ENCODE measurements at regions of chr4 and their contacts with region 1.

Region 1: GRCh38 chr4:152500800-152501434 is 35.0 kb downstream of the FBXW7 start:
- DNase-seq: peak; percentile 93
- ATAC-seq: peak; percentile 74
- H3K4me3 ChIP-seq: no peak overlapping the region
- H3K27ac ChIP-seq: no peak overlapping the region
- H3K4me1 ChIP-seq: peaks cover 3% of the 10 kb centered on the region; the same call in 1 of the 2 replicates
- H3K27me3 ChIP-seq: no peaks in the 10 kb centered on the region
- CTCF ChIP-seq: peak; percentile 83
- POLR2A ChIP-seq: no peak
- RAD21 ChIP-seq: peak; percentile 81

Region 2: DNA sequence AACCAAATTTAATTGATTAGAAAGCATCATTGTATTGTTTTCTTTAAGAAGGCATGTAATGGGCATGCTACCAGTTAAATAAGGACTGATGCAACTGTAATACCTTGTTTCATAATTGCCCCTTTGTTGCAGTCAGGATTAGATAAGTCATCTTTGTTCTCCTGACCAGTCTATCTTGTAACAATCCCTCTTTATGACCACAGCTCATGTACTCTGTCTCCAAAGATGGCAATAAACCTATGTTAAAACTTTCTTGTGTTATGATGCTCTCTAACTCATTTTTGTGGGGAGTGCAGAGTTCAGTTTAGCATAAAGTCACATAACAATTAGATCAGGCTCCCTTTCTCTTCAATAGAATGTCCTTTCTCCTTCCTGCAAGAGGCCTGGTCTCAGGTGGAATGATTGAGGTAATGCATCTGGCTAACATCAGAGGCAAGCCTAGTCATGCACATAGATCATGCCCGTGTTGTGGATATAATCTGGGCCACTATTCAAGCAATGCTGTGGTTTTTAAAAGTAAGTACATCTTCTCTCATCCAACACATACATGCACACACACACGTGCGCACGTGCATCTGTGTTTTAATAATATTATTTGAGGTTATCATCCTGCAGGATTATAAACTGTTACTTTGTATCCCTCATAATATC is 133.3 kb after region 1 on chr4:
- CTCF ChIA-PET with region 1: interaction called, 24 read pairs
- POLR2A ChIA-PET with region 1: no interaction called
- dilution Hi-C with region 1: no loop called
- in situ Hi-C with region 1: no loop called
- intact Hi-C with region 1: no loop called
- DNase-seq: no peak
- ATAC-seq: no peak
- H3K4me3 ChIP-seq: no peak overlapping the region
- H3K27ac ChIP-seq: no peak overlapping the region
- H3K4me1 ChIP-seq: no peaks in the 10 kb centered on the region
- H3K27me3 ChIP-seq: no peaks in the 10 kb centered on the region
- CTCF ChIP-seq: no peak
- POLR2A ChIP-seq: no peak
- RAD21 ChIP-seq: no peak

Measured in IMR-90 (cell line).